Esophagus squamous epithelium (tissue), 5 donors: ENCODE measurements at regions of chr7 and their contacts with region 1.

Region 1: GRCh38 chr7:73865738-73866445 is 4.9 kb downstream of the TMEM270 start:
- DNase-seq: no peak
- H3K4me3 ChIP-seq: no peak overlapping the region
- H3K27ac ChIP-seq: no peak overlapping the region
- H3K4me1 ChIP-seq: peaks cover 8 to 22% (median 14%) of the 10 kb centered on the region in 3 donors
- H3K27me3 ChIP-seq: no peaks in the 10 kb centered on the region
- CTCF ChIP-seq: peak; percentile 40 to 72 (median 60)
- POLR2A ChIP-seq: no peak

Region 2: GRCh38 chr7:73978661-73979563 is 113.0 kb after region 1 on chr7:
- intact Hi-C with region 1: loop called (anchors 10 kb)
- DNase-seq: no peak
- H3K4me3 ChIP-seq: no peak overlapping the region
- H3K27ac ChIP-seq: peak overlapping the region in 1 of 4 donors; percentile 8
- H3K4me1 ChIP-seq: peaks cover 5 to 57% (median 6%) of the 10 kb centered on the region in 3 donors
- H3K27me3 ChIP-seq: no peaks in the 10 kb centered on the region
- CTCF ChIP-seq: peak; percentile 15 to 72 (median 34)
- POLR2A ChIP-seq: no peak

Region 3: GRCh38 chr7:74026903-74027551 is 161.1 kb after region 1 on chr7:
- intact Hi-C with region 1: loop called (anchors 5 kb)
- DNase-seq: no peak
- H3K4me3 ChIP-seq: peak overlapping the region in 3 of 4 donors; percentile 52 to 70 (median 57)
- H3K27ac ChIP-seq: peak overlapping the region; percentile 69 to 93 (median 86)
- H3K4me1 ChIP-seq: peaks cover 23 to 100% (median 71%) of the 10 kb centered on the region in 3 donors
- H3K27me3 ChIP-seq: peaks cover 0 to 86% (median 0%) of the 10 kb centered on the region in 4 donors
- CTCF ChIP-seq: peak; percentile 77 to 96 (median 92)
- POLR2A ChIP-seq: no peak